Activated B cell treated with CpG ODN at 0.5 μM for 24 hours (primary cell): ENCODE measurements at regions of chr6 and their contacts with region 1.

Region 1: DNA sequence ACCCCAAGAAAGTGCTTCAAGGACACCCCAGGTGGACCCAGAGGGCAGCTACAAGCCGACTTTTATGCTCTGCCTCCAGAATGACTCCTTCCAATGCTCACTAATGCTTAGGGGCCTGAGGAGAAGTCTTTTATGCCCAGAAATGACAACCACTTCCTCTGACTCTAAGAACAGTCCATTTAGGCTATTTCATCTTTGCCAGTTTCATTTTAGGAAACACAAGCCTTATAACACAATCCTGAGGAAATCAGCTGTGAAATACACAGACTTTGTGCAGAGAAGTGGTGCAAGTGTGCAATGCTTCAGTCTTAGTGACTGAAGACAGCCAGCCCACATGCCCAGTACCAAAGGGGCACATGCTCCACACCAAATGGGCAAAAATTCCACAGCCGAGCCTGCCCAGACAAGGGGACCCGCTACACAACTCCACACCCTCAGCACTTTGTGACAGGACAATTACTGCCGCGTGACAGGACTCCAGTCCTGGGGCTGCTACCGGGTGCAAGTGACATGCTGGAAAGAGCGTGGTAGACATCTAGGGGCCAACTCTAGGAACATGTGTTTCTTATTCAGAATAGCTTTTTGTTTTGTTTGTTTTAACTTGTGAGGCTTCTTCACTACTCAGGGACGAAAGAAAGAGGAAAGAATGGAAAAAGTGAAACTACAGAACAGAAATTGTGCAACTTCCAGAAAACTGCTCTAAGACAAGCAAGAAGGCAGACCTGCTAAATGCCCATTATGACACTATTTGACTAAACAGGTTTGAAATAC is 28.2 kb upstream of the PLAGL1 start:
- DNase-seq: no peak
- ATAC-seq: no peak
- H3K4me3 Mint-ChIP-seq: peak overlapping the region; percentile 9
- H3K27ac Mint-ChIP-seq: no peak overlapping the region
- H3K4me1 Mint-ChIP-seq: peaks cover 16% of the 10 kb centered on the region
- H3K27me3 Mint-ChIP-seq: no peaks in the 10 kb centered on the region
- CTCF ChIP-seq: no peak

Region 2: GRCh38 chr6:144055121-144055931 is 19.1 kb after region 1 on chr6:
- CTCF ChIA-PET with region 1: no interaction called
- POLR2A ChIA-PET with region 1: interaction called, 13 read pairs
- intact Hi-C with region 1: no loop called
- DNase-seq: no peak
- ATAC-seq: peak; percentile 92
- H3K4me3 Mint-ChIP-seq: peak overlapping the region; percentile 82
- H3K27ac Mint-ChIP-seq: peak overlapping the region; percentile 93
- H3K4me1 Mint-ChIP-seq: peaks cover 30% of the 10 kb centered on the region
- H3K27me3 Mint-ChIP-seq: no peaks in the 10 kb centered on the region
- CTCF ChIP-seq: no peak